Tibial artery (tissue), 4 donors: ENCODE measurements at regions of chr19 and their contacts with region 1.

Region 1: GRCh38 chr19:14147797-14148605 is 11.6 kb upstream of the ASF1B start:
- DNase-seq: peak; percentile 74 to 85
- H3K4me3 ChIP-seq: peak overlapping the region in 1 of 2 donors; percentile 0
- H3K27ac ChIP-seq: peak overlapping the region; percentile 3 to 59
- H3K4me1 ChIP-seq: peaks cover 0 to 28% (median 26%) of the 10 kb centered on the region in 4 donors
- H3K27me3 ChIP-seq: no peaks in the 10 kb centered on the region
- CTCF ChIP-seq: peak; percentile 81 to 88

Region 2: GRCh38 chr19:13880059-13881043 is 267.6 kb before region 1 on chr19:
- intact Hi-C with region 1: loop called (anchors 5 kb)
- DNase-seq: peak; percentile 98 to 99
- H3K4me3 ChIP-seq: peak overlapping the region; percentile 28 to 42
- H3K27ac ChIP-seq: peak overlapping the region; percentile 80 to 90
- H3K4me1 ChIP-seq: peaks cover 0 to 54% (median 15%) of the 10 kb centered on the region in 4 donors
- H3K27me3 ChIP-seq: no peaks in the 10 kb centered on the region
- CTCF ChIP-seq: peak; percentile 99 to 100

Region 3: DNA sequence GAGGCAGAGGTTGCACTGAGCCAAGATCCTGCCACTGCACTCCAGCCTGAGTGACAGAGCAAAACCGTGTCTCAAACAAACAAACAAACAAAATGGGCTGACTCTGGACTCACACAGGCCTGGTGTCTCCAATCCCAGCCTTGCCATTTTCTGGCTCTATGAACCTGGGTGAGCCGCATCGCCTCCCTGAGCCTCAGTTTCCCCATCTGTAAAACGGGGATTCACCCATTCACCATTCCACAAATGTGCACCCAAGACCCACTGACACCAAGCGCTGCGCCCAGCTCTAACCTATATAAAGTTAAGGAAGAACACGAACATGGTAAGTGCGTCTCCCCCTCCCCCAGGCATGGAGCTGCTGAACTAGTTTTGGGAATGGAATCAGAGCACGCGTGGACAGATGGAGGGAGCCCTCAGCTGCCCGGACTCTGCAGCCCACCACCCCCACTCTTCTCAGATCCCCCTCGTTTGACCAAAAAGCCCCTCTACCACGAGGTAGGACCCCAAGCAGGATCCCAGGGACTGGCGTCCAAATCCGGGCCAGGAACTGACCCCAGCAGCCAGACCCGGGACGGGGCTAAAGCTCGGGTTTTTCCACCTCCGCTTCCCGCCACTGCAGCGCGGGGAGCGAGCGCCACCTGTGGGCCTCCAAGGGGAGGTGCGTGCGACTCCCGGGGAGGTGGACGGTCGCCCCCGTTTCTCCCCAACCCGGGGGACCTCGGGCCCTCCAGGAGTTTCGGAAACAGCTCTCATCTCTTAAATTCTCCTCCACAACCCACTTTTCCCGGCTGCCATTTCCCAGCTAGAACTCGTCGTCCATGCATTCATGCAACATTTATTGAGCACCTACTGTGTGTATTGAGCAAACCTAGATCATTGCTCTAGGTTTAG is 200.2 kb after region 1 on chr19:
- intact Hi-C with region 1: loop called (anchors 5 kb)
- DNase-seq: peak; percentile 31 to 69
- H3K4me3 ChIP-seq: peak overlapping the region; percentile 13 to 25
- H3K27ac ChIP-seq: no peak overlapping the region
- H3K4me1 ChIP-seq: peaks cover 0 to 7% (median 4%) of the 10 kb centered on the region in 4 donors
- H3K27me3 ChIP-seq: peaks cover 0 to 20% of the 10 kb centered on the region in 2 donors
- CTCF ChIP-seq: peak; percentile 91 to 98

Region 4: GRCh38 chr19:14405758-14406644 is 258.0 kb after region 1 on chr19:
- intact Hi-C with region 1: loop called (anchors 10 kb)
- DNase-seq: peak; percentile 73 to 91
- H3K4me3 ChIP-seq: peak overlapping the region in 1 of 2 donors; percentile 30
- H3K27ac ChIP-seq: peak overlapping the region; percentile 66 to 67
- H3K4me1 ChIP-seq: peaks cover 0 to 26% (median 5%) of the 10 kb centered on the region in 4 donors
- H3K27me3 ChIP-seq: no peaks in the 10 kb centered on the region
- CTCF ChIP-seq: peak; percentile 88 to 96

Region 5: DNA sequence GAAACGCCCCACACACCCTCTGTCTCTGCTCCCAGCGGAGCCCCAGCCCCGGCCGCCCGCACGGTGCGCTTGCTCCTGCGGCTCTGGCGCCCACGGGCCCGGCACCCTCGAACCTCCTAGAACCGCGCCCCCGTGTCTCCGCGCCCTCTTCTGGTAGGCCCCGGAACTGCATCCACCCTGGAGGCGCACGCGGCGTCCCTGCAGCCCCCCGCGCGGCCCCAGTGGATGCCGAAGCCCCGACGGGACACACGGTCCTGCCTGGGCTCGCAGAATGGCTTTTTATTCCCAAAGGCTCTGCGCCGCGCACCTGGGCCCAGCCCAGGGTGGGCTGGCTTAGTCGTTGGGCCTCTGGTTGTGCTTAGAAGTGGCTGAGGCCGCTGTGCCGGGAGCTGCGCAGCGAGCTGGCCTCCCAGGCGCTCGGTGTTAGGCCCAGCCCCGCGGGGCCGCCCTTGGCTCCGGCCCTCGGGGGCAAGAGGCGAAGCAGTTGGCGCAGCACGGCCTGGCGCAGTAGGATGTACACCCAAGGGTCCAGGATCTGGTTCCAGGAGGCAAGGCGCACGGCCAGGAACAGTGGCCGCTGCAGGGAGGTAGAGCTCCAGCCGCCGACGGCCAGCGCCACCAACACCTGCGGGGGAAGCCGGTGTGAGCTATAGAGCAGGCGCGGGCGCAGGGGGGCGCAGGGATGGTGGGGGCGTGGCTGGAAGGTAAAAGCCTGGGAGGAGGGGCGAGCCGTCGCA is 324.4 kb after region 1 on chr19:
- intact Hi-C with region 1: loop called (anchors 10 kb)
- DNase-seq: peak; percentile 65 to 79
- H3K4me3 ChIP-seq: peak overlapping the region in 1 of 2 donors; percentile 3
- H3K27ac ChIP-seq: no peak overlapping the region
- H3K4me1 ChIP-seq: peaks cover 15 to 50% (median 34%) of the 10 kb centered on the region in 4 donors
- H3K27me3 ChIP-seq: peaks cover 0 to 36% of the 10 kb centered on the region in 2 donors
- CTCF ChIP-seq: peak; percentile 93 to 99